Activated T-helper 1 cell treated with anti-CD3 and anti-CD28 coated beads, Interleukin-12 subunit alpha, Interleukin-12 subunit beta, Interleukin-2, Interleukin-4 antibody, amounts not matched to agents 30 ng/mL and 10 ng/mL and 1 ng/mL, durations not matched to agents 14 hours and 24 hours and 36 hours (primary cell): ENCODE measurements at regions of chr21 and their contacts with region 1.

Region 1: DNA sequence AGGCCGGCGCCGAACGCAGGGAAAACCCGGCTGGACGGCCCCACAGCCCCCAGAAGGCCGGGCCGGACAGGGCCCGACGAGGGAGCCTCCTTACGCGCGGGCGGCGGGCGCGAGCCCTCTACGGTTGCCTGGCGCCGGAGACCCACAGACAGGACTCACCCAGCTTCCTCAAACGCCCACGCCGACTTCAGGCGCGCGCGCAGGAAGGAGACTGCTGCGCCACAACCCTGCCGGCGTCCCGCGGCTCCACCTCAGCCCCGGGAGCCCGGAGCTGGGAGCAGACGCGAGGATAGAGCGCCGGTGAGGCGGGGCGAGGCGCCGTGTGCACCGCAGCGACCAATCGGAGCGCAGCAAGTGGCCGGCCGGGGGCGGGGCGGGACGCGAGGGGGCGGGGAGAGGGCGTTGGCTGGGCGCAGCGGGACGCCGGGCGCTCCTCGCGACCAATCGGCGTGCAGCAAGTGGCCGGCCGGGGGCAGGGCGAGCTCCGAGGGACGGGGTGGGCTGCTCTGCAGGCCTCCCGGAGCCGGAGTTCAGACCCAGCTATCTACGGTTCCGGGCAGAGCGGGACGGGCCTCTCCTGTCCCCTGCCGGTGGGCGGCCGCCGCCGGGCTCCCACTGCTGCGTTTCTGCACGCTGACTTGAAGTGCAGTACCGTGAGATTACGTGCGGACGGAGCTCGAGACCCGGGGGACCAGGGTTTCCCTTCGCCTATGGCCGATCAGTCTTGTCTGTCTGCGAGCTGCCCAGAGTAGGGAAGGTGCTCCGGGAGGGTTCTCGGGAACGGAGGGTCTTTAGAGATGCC is at the start of gene TMEM50B:
- DNase-seq: peak; percentile 93
- H3K4me3 Mint-ChIP-seq: peak within 1 kb of the TSS; percentile 88
- H3K27ac Mint-ChIP-seq: peak within 1 kb of the TSS; percentile 84
- H3K4me1 Mint-ChIP-seq: peaks cover 23% of the 10 kb centered on the region
- H3K27me3 Mint-ChIP-seq: peaks cover 6% of the 10 kb centered on the region
- total RNA-seq, gene TMEM50B: 12.0 and 14.0 TPM in 2 replicates

Region 2: DNA sequence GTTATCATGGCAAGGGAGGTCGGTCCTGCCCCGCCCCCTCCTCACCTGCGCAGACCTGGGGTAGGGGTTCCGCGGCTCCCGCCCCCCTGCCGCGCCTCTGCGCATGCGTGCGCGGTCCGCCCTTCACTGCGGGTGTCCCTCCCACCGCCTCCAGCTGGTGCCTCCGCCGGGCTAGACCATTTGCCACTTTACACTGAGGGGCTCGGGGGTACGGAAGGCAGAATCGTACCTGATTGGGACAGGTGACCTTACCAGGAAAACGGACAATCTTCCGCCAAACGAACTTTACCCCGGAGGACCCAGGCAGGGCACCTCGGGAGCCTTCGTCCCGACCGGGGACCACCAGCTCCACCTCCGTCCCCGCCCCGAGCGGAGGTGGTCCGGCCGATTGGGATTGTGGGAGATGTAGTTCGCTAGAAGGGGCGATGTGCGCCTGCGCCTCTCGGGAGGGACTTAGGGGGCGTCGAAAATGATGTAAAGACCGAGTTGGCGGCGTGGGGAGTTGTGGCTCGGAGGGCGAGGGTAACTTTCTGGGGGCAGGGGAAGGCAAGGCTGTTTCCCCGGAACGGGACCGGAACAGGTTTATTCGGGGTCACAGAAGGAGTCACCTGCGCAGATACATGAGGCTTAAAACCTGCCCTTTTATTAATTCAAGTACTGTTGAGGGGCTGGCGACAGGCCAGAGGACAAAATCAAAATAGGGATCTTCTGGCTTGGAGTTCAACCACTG is 11.7 kb after region 1 on chr21 and contains the start of gene DNAJC28:
- intact Hi-C with region 1: loop called (anchors 1 kb)
- DNase-seq: peak; percentile 91
- H3K4me3 Mint-ChIP-seq: peak within 1 kb of the TSS; percentile 84
- H3K27ac Mint-ChIP-seq: peak within 1 kb of the TSS; percentile 74
- H3K4me1 Mint-ChIP-seq: peaks cover 11% of the 10 kb centered on the region
- H3K27me3 Mint-ChIP-seq: peaks cover 12% of the 10 kb centered on the region
- total RNA-seq, gene DNAJC28: 0.12 and 0.18 TPM in 2 replicates

Region 3: GRCh38 chr21:33514229-33514628 is 34.3 kb after region 1 on chr21:
- intact Hi-C with region 1: loop called (anchors 2 kb)
- DNase-seq: no peak
- H3K4me3 Mint-ChIP-seq: no peak overlapping the region
- H3K27ac Mint-ChIP-seq: peak overlapping the region; percentile 42
- H3K4me1 Mint-ChIP-seq: peaks cover 18% of the 10 kb centered on the region
- H3K27me3 Mint-ChIP-seq: no peaks in the 10 kb centered on the region

Region 4: GRCh38 chr21:33588485-33589335 is 108.8 kb after region 1 on chr21 and contains the start of gene DONSON:
- intact Hi-C with region 1: loop called (anchors 2 kb)
- DNase-seq: peak; percentile 90
- H3K4me3 Mint-ChIP-seq: peak within 1 kb of the TSS; percentile 92
- H3K27ac Mint-ChIP-seq: peak within 1 kb of the TSS; percentile 84
- H3K4me1 Mint-ChIP-seq: peaks cover 31% of the 10 kb centered on the region
- H3K27me3 Mint-ChIP-seq: no peaks in the 10 kb centered on the region
- total RNA-seq, gene DONSON: 37.5 and 38.7 TPM in 2 replicates